Activated CD4-positive, alpha-beta memory T cell treated with anti-CD3 and anti-CD28 coated beads for 36 hours (primary cell): ENCODE measurements at regions of chr4 and their contacts with region 1.

Region 1: GRCh38 chr4:3047464-3048286 is 26.7 kb downstream of the HTT-AS start:
- DNase-seq: peak; percentile 93
- H3K4me3 Mint-ChIP-seq: peak overlapping the region; percentile 68
- H3K27ac Mint-ChIP-seq: peak overlapping the region; percentile 79
- H3K4me1 Mint-ChIP-seq: peaks cover 38% of the 10 kb centered on the region
- H3K27me3 Mint-ChIP-seq: peaks cover 2% of the 10 kb centered on the region

Region 2: GRCh38 chr4:2934813-2935761 is 112.6 kb before region 1 on chr4:
- CTCF ChIA-PET with region 1: interaction called, 3 read pairs
- POLR2A ChIA-PET with region 1: no interaction called
- intact Hi-C with region 1: loop called (anchors 1 kb)
- DNase-seq: peak; percentile 97
- H3K4me3 Mint-ChIP-seq: peak overlapping the region; percentile 93
- H3K27ac Mint-ChIP-seq: peak overlapping the region; percentile 95
- H3K4me1 Mint-ChIP-seq: peaks cover 53% of the 10 kb centered on the region
- H3K27me3 Mint-ChIP-seq: no peaks in the 10 kb centered on the region

Region 3: GRCh38 chr4:3085948-3086655 is 38.4 kb after region 1 on chr4:
- CTCF ChIA-PET with region 1: no interaction called
- POLR2A ChIA-PET with region 1: no interaction called
- intact Hi-C with region 1: loop called (anchors 1 kb)
- DNase-seq: no peak
- H3K4me3 Mint-ChIP-seq: peak overlapping the region; percentile 41
- H3K27ac Mint-ChIP-seq: peak overlapping the region; percentile 73
- H3K4me1 Mint-ChIP-seq: peaks cover 56% of the 10 kb centered on the region
- H3K27me3 Mint-ChIP-seq: no peaks in the 10 kb centered on the region

Region 4: DNA sequence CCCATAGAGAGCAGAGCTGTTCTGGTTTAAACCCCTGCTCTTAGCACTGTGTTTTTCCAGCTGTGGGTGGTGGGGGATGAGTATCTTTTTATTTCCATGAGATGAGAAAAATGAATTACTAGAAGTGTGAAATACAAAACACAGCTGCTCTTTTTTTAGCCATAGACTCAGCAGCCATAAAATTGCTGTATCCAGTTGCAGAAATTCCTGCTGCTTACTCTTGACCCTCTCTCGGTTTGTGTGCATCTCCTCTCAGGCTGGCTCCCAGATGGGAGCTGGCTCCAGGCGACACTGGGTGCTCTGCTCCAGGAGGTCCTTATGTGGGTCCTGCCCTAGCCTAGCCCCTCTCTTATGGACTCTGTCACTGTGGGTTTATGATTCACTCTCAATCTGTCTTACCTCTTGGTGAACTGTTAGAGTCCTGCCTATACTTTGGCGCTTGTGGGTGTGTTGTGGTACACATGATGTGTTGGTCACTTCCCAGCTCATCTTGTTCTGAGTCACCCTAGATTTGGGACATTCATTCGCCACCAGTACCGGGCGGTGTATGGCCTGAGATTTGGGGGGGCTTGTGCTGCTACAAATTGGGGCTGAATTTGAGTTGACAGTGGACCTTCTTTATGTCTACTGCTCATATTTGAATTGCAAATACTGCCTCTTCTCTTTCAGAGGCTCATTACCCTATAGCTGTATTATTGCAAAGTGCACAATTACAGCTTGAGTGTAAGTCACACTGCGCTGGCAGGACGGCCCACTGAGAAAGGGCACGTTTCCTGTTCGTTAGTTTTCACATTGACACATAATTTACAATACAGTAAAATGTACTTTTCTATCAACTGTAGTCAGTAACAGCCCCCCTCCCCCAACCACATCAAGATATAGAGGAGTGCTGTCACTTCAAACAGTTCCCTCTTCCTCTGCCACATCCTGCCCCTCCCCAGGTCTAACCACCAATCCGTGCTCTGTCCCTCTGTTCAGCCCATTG is 154.3 kb after region 1 on chr4:
- CTCF ChIA-PET with region 1: no interaction called
- POLR2A ChIA-PET with region 1: no interaction called
- intact Hi-C with region 1: loop called (anchors 2 kb)
- DNase-seq: peak; percentile 81
- H3K4me3 Mint-ChIP-seq: no peak overlapping the region
- H3K27ac Mint-ChIP-seq: peak overlapping the region; percentile 82
- H3K4me1 Mint-ChIP-seq: peaks cover 39% of the 10 kb centered on the region
- H3K27me3 Mint-ChIP-seq: no peaks in the 10 kb centered on the region